Head of caudate nucleus (tissue), 42 donors: ENCODE measurements at regions of chr20 and their contacts with region 1.

Region 1: GRCh38 chr20:4956200-4956810 is 45.0 kb downstream of the SLC23A2 start:
- DNase-seq: peak in 3 of 42 donors; percentile 19 to 68 (median 44)

Region 2: DNA sequence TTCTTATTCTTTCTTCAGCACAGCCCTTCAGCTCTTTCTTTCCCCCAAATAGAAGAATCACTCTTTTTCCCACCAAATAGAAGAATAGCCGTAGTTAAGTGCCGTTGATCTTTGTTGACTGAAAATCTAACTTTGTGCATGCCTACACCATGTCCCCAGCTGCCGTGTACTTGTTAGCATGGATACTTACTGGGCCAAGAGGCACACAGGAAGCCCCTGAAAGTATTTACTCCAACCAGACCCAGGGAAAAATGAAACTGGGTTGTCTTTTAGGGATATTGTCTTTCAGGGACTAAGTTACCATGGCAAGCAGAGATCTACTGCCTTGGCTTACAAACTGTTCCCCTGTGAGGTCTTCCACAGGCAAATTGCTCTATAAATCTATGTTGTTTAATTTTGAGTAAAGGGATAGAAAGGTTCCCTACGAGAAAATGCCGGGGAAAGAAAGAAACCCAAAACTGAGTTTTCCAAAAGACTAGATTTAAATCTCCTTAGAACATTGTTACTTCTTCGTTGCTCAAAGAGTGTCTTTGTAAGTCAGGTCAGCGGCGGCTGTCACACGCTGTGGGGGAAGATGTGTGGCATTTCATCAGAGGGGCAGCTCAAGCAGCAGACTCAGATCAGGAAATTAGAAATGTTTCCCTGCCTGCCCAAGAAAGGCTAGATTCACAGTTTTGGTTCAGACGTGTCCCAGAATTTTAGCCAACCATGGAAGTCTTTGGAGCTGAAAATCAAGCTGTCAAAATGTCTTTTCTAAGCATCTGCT is 422.8 kb before region 1 on chr20:
- intact Hi-C with region 1: no loop called
- DNase-seq: no peak

Region 3: GRCh38 chr20:4613718-4614620 is 342.3 kb before region 1 on chr20:
- intact Hi-C with region 1: loop called (anchors 5 kb)
- DNase-seq: peak; percentile 52 to 93 (median 82)

Region 4: DNA sequence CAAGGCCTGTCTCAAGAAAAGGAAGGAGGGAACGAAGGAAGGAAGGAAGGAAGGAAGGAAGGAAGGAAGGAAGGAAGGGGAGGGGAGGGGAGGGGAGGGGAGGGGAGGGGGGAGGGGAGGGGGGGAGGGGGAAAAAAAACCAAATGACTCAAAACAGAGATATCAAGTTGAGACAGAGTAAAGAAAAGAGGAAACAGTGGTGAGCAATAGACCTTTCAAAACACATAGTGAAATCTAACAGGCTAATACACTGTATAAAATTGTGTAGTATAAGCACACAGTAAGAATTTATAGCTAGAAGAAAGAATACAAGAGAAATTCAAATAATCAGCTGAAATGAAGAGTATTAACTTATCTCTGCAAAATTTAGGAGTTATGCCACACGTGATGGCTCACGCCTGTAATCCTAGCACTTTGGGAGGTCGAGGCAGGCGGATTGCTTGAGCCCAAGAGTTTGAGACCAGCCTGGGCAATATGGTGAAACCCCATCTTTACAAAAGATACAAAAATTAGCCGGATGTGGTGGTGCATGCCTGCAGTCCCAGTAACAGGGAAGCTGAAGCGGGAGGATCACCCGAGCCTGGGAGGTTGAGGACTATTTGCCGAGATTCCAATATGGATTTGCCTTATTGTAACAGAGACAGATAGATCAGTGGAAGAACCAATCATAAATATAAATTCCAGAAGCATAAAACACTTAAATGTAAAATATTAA is 111.4 kb before region 1 on chr20:
- intact Hi-C with region 1: no loop called
- DNase-seq: peak in 1 of 42 donors; percentile 20

Region 5: DNA sequence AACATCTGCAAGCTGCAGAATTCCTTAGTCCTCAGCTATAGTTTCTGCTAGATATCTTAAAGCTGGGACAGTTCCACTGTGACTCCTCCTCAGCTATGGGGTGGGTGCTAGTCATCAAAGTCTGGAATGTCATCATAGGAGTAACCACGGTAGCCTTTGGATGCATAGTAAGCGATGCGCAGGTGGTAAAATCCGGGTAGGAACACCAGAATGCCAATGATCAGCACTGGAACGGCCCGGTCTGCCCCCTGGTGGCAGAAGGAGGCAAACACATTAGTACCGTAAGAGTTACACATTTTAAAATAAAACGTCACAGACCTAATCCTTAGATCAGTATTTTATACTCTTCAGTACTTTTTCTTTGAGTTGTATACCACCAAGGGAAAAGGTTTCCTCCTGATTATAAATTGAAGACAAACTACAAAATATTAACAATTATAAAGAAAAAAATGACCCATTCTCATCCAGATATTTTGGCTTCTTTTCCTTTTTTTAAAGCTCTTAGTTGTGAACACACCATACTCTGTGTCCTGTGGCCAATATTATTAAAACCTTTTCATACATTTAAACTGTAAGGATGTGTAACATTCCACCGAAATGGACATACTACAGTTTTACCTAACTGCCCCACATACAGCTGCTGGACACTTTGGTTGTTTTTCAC is 144.5 kb after region 1 on chr20:
- intact Hi-C with region 1: loop called (anchors 10 kb)
- DNase-seq: peak; percentile 60 to 95 (median 86)